ENCODE measurements at regions of chr15 and their contacts with region 1.

Region 1: GRCh38 chr15:62649793-62650420 is 392.6 kb upstream of the TPM1 start:
- DNase-seq: peak; percentile 58
- ATAC-seq: no peak; the same call in 1 of the 2 replicates
- H3K4me3 ChIP-seq: no peak overlapping the region
- H3K27ac ChIP-seq: no peak overlapping the region
- H3K4me1 ChIP-seq: peaks cover 3% of the 10 kb centered on the region; the same call in 1 of the 2 replicates
- H3K27me3 ChIP-seq: no peaks in the 10 kb centered on the region
- CTCF ChIP-seq: no peak
- POLR2A ChIP-seq: no peak
- RAD21 ChIP-seq: no peak

Region 2: GRCh38 chr15:62637950-62638619 is 11.8 kb before region 1 on chr15:
- CTCF ChIA-PET with region 1: no interaction called
- POLR2A ChIA-PET with region 1: no interaction called
- dilution Hi-C with region 1: no loop called
- in situ Hi-C with region 1: no loop called
- intact Hi-C with region 1: loop called (anchors 1 kb)
- DNase-seq: no peak
- ATAC-seq: no peak
- H3K4me3 ChIP-seq: no peak overlapping the region
- H3K27ac ChIP-seq: no peak overlapping the region
- H3K4me1 ChIP-seq: peaks cover 2% of the 10 kb centered on the region; the same call in 1 of the 2 replicates
- H3K27me3 ChIP-seq: no peaks in the 10 kb centered on the region
- CTCF ChIP-seq: no peak
- POLR2A ChIP-seq: no peak
- RAD21 ChIP-seq: no peak

Region 3: GRCh38 chr15:62758126-62758951 is 108.4 kb after region 1 on chr15:
- CTCF ChIA-PET with region 1: no interaction called
- POLR2A ChIA-PET with region 1: no interaction called
- dilution Hi-C with region 1: no loop called
- in situ Hi-C with region 1: no loop called
- intact Hi-C with region 1: no loop called
- DNase-seq: peak; percentile 90
- ATAC-seq: peak; percentile 94
- H3K4me3 ChIP-seq: no peak overlapping the region
- H3K27ac ChIP-seq: peak overlapping the region; percentile 45; the same call in 1 of the 2 replicates
- H3K4me1 ChIP-seq: peaks cover 10% of the 10 kb centered on the region
- H3K27me3 ChIP-seq: no peaks in the 10 kb centered on the region
- CTCF ChIP-seq: no peak
- POLR2A ChIP-seq: 0 out of 2 replicates have a peak, but pooled peaks have one; percentile 32
- RAD21 ChIP-seq: no peak